KBM-7 (cell line): ENCODE measurements at regions of chr6 and their contacts with region 1.

Region 1: GRCh38 chr6:44489910-44490604 is 102.6 kb downstream of the CDC5L start:
- DNase-seq: no peak

Region 2: DNA sequence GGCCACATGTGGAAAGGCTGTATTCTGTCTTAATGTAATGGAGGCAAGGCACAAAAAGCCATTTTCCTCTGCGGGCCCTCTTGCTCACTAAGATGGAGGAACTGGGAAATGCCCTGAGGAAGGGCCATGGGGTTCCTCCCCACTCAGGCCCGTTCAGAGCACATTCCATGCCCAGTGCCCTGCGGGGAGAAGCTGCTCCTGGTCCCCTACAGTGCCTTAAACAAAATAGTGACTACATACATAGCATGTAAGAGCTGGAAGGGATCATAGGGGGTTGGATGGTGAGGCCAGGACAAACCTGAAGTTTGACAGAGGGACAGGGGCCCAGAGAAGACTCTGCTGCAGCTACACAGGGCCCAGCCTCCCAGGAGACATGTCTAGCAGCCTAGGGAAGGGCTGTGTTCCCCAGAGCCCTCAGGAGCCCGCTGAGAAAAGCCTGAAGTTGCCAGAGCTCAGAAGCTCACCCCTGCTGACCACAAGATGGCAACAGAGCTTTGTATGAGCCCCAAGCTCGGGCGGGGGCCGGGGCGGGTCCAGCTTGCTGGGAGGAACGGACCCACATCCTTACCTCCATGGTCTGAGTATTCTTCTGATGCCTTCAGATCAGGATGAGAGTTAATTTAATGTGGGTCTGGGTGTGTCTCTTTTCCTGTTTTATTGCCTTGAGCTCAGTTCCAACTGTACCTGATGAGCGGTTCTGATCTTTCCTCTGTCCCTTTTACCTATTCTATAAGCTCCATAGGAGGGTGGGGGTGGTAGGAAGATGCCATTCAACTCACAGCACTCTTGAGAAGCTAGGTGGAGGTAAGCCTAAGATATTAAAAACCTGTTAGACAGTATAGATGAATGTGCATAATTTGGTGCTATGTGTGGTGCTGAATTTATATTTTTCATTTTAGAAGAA is 140.3 kb after region 1 on chr6:
- in situ Hi-C with region 1: loop called (anchors 10 kb)
- DNase-seq: peak; percentile 41